ENCODE measurements at regions of chr11 and their contacts with region 1.

Region 1: DNA sequence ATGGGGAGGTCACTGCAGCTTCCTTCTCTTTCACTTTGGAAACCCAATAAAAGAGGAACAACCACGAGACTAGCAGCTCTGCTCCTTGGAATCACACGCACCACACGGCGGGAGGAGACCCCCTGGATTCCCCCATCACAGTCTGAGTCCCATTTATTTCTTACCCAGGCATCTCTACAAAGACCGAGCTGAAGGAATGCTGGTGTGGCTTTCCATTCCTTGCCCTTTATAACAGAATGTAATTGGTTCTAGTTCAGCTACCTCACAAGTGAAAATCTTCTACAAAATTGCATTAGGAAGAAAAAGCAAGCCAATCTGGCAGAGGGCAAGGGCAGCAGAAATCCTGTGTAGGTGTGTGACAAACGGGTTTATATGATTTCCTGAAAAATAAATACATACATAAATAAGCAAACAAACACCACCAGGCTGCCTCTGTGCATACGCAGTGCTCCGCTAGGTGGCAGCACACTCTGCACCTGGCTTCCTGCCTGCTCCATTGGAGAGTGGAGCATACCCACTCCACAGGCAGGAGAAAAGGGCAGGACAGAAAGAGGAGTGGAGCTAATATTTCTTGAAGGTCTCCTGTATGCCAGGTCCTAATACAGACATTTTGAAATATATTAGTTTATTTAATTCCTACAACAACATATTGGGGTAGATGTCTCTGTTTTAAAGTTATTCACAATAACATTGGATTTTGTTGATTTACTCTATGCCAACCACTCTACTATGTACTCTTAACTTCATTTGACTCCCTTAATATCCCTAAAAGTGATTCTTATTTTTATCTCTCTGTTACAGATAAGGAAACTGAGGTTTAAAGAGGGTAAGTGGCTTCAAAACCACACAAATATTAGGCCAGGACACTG is 673.1 kb downstream of the KCNA4 start:
- DNase-seq: peak; percentile 46 to 73
- H3K4me3 ChIP-seq: no peak overlapping the region
- H3K4me1 ChIP-seq: no peaks in the 10 kb centered on the region
- H3K27me3 ChIP-seq: no peaks in the 10 kb centered on the region

Region 2: GRCh38 chr11:27698872-27699474 is 1644.7 kb before region 1 on chr11:
- in situ Hi-C with region 1: loop called (anchors 25 kb)
- DNase-seq: peak; percentile 84 to 91
- H3K4me3 ChIP-seq: peak overlapping the region; percentile 4; the same call in 1 of the 2 replicates
- H3K4me1 ChIP-seq: no peaks in the 10 kb centered on the region
- H3K27me3 ChIP-seq: peaks cover 59% of the 10 kb centered on the region

Measured in HAP-1 (cell line).